ENCODE measurements at regions of chr20 and their contacts with region 1.

Region 1: GRCh38 chr20:35146920-35147574 is at the start of gene EDEM2:
- DNase-seq: peak; percentile 95
- ATAC-seq: peak; percentile 93 to 97
- H3K4me3 ChIP-seq: peak within 1 kb of the TSS; percentile 72
- H3K27ac ChIP-seq: peak within 1 kb of the TSS; percentile 83
- H3K4me1 ChIP-seq: peaks cover 38% of the 10 kb centered on the region
- H3K27me3 ChIP-seq: no peaks in the 10 kb centered on the region
- CTCF ChIP-seq: no peak
- total RNA-seq, gene EDEM2: 45.4 TPM

Region 2: GRCh38 chr20:35063168-35063567 is 83.9 kb before region 1 on chr20:
- intact Hi-C with region 1: no loop called
- DNase-seq: no peak
- ATAC-seq: no peak
- H3K4me3 ChIP-seq: no peak overlapping the region
- H3K27ac ChIP-seq: no peak overlapping the region
- H3K4me1 ChIP-seq: peaks cover 7% of the 10 kb centered on the region
- H3K27me3 ChIP-seq: no peaks in the 10 kb centered on the region
- CTCF ChIP-seq: no peak

Region 3: DNA sequence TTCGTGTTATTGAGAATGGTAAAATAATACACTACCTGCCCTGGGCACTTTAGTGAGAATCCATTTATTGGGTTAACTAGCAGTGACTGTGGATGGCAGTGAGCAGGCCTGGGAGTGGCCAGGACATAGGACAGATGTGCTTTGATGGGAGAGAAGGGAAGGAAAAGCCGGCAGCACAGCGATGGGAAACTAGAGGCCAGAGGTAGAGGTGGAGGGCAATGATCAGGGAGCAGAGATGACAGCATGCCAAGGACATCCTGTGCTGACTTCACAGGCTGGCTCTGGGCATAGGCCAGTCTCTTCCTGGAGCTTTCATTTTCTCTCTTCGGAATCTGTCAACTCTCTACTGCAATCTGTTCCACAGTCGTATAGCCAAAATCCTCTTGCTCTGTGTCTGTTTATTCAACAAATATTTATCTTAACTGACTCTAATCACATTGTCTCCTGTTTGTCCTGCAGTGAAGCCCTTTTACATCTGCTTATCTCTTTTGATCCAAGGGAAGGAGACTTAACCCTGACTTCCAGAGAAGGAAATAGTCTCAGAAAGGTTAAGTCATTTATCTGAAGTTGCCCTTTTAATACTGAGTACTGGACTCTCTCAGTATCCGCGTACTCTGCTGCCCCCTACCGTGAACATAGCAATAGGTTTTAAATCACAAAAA is 61.0 kb after region 1 on chr20:
- intact Hi-C with region 1: loop called (anchors 5 kb)
- DNase-seq: peak; percentile 75
- ATAC-seq: peak; percentile 96 to 97
- H3K4me3 ChIP-seq: no peak overlapping the region
- H3K27ac ChIP-seq: peak overlapping the region; percentile 74
- H3K4me1 ChIP-seq: peaks cover 10% of the 10 kb centered on the region
- H3K27me3 ChIP-seq: no peaks in the 10 kb centered on the region
- CTCF ChIP-seq: peak; percentile 81

Measured in lower lobe of right lung (tissue), 2 donors.